Caco-2 (cell line): ENCODE measurements at regions of chr16 and their contacts with region 1.

Region 1: GRCh38 chr16:20849587-20850390 is 43.5 kb downstream of the REXO5 start:
- DNase-seq: peak; percentile 58 to 78
- H3K4me3 ChIP-seq: no peak overlapping the region
- H3K4me3 Mint-ChIP-seq: no peak overlapping the region
- H3K27ac Mint-ChIP-seq: no peak overlapping the region
- H3K4me1 ChIP-seq: peaks cover 39% of the 10 kb centered on the region
- H3K4me1 Mint-ChIP-seq: peaks cover 14% of the 10 kb centered on the region
- H3K27me3 ChIP-seq: no peaks in the 10 kb centered on the region
- H3K27me3 Mint-ChIP-seq: no peaks in the 10 kb centered on the region
- CTCF ChIP-seq: peak; percentile 93 to 97

Region 2: GRCh38 chr16:20900299-20901067 is 50.7 kb after region 1 on chr16 and contains the starts of genes DCUN1D3 and LYRM1:
- CTCF ChIA-PET with region 1: interaction called, 6 read pairs
- POLR2A ChIA-PET with region 1: interaction called, 8 read pairs
- intact Hi-C with region 1: loop called (anchors 1 kb)
- DNase-seq: peak; percentile 94 to 98
- H3K4me3 ChIP-seq: peak within 1 kb of the TSS; percentile 68
- H3K4me3 Mint-ChIP-seq: peak within 1 kb of the TSS; percentile 74
- H3K27ac Mint-ChIP-seq: peak within 1 kb of the TSS; percentile 93
- H3K4me1 ChIP-seq: peaks cover 52% of the 10 kb centered on the region
- H3K4me1 Mint-ChIP-seq: peaks cover 54% of the 10 kb centered on the region
- H3K27me3 ChIP-seq: no peaks in the 10 kb centered on the region
- H3K27me3 Mint-ChIP-seq: no peaks in the 10 kb centered on the region
- CTCF ChIP-seq: no peak
- total RNA-seq, gene DCUN1D3: 16.4 and 19.2 TPM in 2 replicates
- total RNA-seq, gene LYRM1: 40.3 and 46.1 TPM in 2 replicates

Region 3: DNA sequence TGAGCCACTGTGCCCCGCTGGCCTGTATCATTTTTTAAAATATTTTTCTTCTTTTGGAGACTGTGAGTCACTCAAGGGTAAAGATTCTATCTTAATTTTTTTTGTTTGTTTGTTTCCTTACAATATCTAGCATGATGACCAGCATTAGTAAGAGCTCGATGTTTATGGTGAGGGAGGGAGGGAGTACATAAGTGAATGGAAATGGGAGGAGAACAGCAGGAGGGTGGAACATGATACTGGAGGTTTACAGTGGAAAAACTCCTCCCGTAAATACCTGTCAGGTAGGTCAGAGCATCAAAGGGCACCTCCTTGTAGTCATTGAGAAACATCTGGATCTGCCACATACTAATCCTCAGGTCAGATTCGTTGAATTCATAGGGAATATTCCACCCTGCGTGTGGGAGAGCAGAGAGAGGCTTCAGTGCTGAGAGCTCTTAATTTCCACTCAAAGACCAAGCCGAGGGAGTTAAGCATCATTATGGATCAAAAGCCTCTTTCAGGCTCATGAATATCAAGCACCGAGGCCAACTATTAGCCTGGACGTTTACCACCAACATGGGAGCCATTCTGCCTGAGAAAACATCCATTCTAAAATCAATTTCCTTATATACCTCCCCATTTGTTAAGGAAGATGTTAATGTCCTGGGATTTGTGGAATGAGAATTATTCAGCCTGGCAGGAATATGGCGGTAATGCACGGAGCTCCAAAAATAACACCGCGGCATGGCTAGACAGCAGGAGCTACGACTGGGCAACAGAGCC is 102.6 kb after region 1 on chr16:
- CTCF ChIA-PET with region 1: no interaction called
- POLR2A ChIA-PET with region 1: no interaction called
- intact Hi-C with region 1: loop called (anchors 5 kb)
- DNase-seq: peak in 1 of 2 experiments; percentile 41
- H3K4me3 ChIP-seq: no peak overlapping the region
- H3K4me3 Mint-ChIP-seq: no peak overlapping the region
- H3K27ac Mint-ChIP-seq: peak overlapping the region; percentile 31
- H3K4me1 ChIP-seq: peaks cover 5% of the 10 kb centered on the region
- H3K4me1 Mint-ChIP-seq: peaks cover 6% of the 10 kb centered on the region
- H3K27me3 ChIP-seq: no peaks in the 10 kb centered on the region
- H3K27me3 Mint-ChIP-seq: no peaks in the 10 kb centered on the region
- CTCF ChIP-seq: no peak

Region 4: GRCh38 chr16:20969386-20969785 is 119.6 kb after region 1 on chr16:
- CTCF ChIA-PET with region 1: no interaction called
- POLR2A ChIA-PET with region 1: no interaction called
- intact Hi-C with region 1: no loop called
- DNase-seq: peak in 1 of 2 experiments; percentile 10
- H3K4me3 ChIP-seq: no peak overlapping the region
- H3K4me3 Mint-ChIP-seq: no peak overlapping the region
- H3K27ac Mint-ChIP-seq: no peak overlapping the region
- H3K4me1 ChIP-seq: no peaks in the 10 kb centered on the region
- H3K4me1 Mint-ChIP-seq: peaks cover 12% of the 10 kb centered on the region
- H3K27me3 ChIP-seq: no peaks in the 10 kb centered on the region
- H3K27me3 Mint-ChIP-seq: no peaks in the 10 kb centered on the region
- CTCF ChIP-seq: no peak

Region 5: DNA sequence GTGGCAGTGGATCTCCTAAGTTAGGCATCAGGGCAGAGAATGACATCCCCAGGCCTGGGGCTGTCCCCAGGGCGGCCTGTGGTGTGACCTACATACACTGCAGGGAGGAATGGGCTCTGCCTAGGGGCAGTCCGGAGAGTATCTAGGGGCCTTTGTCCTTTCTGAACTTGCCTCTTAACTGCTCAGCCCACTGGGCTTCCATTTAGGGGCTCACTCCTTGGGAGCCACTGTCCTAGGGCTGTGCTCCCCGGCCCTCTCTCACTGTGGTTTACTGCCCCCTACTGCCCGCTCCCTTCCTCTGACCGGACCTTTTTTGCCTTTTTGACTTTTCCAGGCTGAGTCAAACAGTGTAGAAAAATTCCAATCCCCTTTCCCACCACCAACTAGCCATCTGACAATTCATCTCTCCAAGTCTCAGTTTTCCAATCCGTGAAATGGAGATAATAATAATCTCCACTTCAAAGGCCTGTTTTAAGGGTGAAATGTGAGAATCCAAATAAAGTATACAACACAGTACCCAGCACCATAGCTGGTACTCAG is 234.0 kb after region 1 on chr16:
- CTCF ChIA-PET with region 1: no interaction called
- POLR2A ChIA-PET with region 1: no interaction called
- intact Hi-C with region 1: loop called (anchors 1 kb)
- DNase-seq: peak; percentile 50 to 73
- H3K4me3 ChIP-seq: no peak overlapping the region
- H3K4me3 Mint-ChIP-seq: no peak overlapping the region
- H3K27ac Mint-ChIP-seq: no peak overlapping the region
- H3K4me1 ChIP-seq: no peaks in the 10 kb centered on the region
- H3K4me1 Mint-ChIP-seq: no peaks in the 10 kb centered on the region
- H3K27me3 ChIP-seq: no peaks in the 10 kb centered on the region
- H3K27me3 Mint-ChIP-seq: no peaks in the 10 kb centered on the region
- CTCF ChIP-seq: peak; percentile 61 to 64

Region 6: GRCh38 chr16:21158208-21159110 is 308.7 kb after region 1 on chr16 and contains the start of gene LDAF1:
- CTCF ChIA-PET with region 1: no interaction called
- POLR2A ChIA-PET with region 1: no interaction called
- intact Hi-C with region 1: loop called (anchors 5 kb)
- DNase-seq: peak; percentile 80 to 86
- H3K4me3 ChIP-seq: peak within 1 kb of the TSS; percentile 74
- H3K4me3 Mint-ChIP-seq: peak within 1 kb of the TSS; percentile 99
- H3K27ac Mint-ChIP-seq: no peak within 1 kb of the TSS
- H3K4me1 ChIP-seq: no peaks in the 10 kb centered on the region
- H3K4me1 Mint-ChIP-seq: no peaks in the 10 kb centered on the region
- H3K27me3 ChIP-seq: no peaks in the 10 kb centered on the region
- H3K27me3 Mint-ChIP-seq: no peaks in the 10 kb centered on the region
- CTCF ChIP-seq: no peak
- total RNA-seq, gene LDAF1: 12.9 and 16.7 TPM in 2 replicates